AG04450 (cell line): ENCODE measurements at regions of chr1 and their contacts with region 1.

Region 1: GRCh38 chr1:160193091-160193819 is 2.9 kb downstream of the CASQ1 start:
- DNase-seq: peak; percentile 78
- H3K4me3 ChIP-seq: no peak overlapping the region
- H3K27ac ChIP-seq: no peak overlapping the region
- H3K27me3 ChIP-seq: peaks cover 8% of the 10 kb centered on the region
- CTCF ChIP-seq: peak; percentile 99

Region 2: GRCh38 chr1:160098852-160099561 is 94.2 kb before region 1 on chr1:
- CTCF ChIA-PET with region 1: interaction called, 67 read pairs
- POLR2A ChIA-PET with region 1: no interaction called
- DNase-seq: peak; percentile 79
- H3K4me3 ChIP-seq: peak overlapping the region; percentile 78
- H3K27ac ChIP-seq: peak overlapping the region; percentile 47
- H3K27me3 ChIP-seq: no peaks in the 10 kb centered on the region
- CTCF ChIP-seq: no peak

Region 3: DNA sequence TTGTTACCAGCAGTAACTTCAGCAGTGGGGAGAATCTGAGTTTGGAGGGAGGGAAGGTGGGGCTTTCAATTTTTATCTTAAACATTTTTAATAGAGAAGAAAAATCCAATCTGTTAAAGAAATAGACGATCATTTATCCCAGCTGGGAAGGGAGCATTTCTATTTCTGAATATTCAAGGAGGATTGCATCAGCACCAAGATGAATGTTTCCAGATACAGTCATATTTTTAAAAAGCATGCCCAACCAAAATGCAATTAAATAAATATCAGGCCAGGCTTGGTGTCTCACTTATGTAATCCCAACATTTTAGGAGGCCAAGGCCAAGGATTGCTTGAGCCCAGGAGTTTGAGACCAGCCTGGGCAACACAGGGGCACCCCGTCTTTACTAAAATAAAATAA is 43.5 kb before region 1 on chr1:
- CTCF ChIA-PET with region 1: interaction called, 21 read pairs
- POLR2A ChIA-PET with region 1: interaction called, 3 read pairs
- DNase-seq: no peak
- H3K4me3 ChIP-seq: no peak overlapping the region
- H3K27ac ChIP-seq: no peak overlapping the region
- H3K27me3 ChIP-seq: no peaks in the 10 kb centered on the region
- CTCF ChIP-seq: no peak

Region 4: GRCh38 chr1:160219062-160219929 is 26.0 kb after region 1 on chr1:
- CTCF ChIA-PET with region 1: interaction called, 258 read pairs
- POLR2A ChIA-PET with region 1: interaction called, 9 read pairs
- DNase-seq: peak; percentile 55
- H3K4me3 ChIP-seq: no peak overlapping the region
- H3K27ac ChIP-seq: peak overlapping the region; percentile 71
- H3K27me3 ChIP-seq: no peaks in the 10 kb centered on the region
- CTCF ChIP-seq: peak; percentile 84

Region 5: DNA sequence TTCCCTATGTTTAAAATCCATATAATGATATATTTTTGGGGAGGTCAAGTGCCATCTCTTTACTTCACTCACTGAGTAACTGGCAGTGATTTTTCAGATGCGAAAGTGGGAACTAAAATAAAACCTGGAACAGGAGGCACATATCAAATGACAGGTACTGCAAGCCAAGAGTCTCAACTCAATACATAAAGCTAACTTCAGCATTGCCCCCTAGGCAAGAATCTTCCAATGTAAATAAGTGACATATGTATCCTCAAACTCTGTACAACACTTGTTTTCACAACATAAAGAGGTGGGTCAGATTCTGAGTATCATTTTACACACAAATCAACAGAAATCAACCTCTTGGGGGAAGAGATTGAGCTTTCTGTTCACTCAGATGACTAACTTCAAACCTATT is 51.0 kb after region 1 on chr1:
- CTCF ChIA-PET with region 1: interaction called, 147 read pairs
- POLR2A ChIA-PET with region 1: no interaction called
- DNase-seq: no peak
- H3K4me3 ChIP-seq: no peak overlapping the region
- H3K27ac ChIP-seq: no peak overlapping the region
- H3K27me3 ChIP-seq: no peaks in the 10 kb centered on the region
- CTCF ChIP-seq: no peak

Region 6: GRCh38 chr1:160284782-160285344 is 91.6 kb after region 1 on chr1 and contains the start of gene PEX19:
- CTCF ChIA-PET with region 1: interaction called, 175 read pairs
- POLR2A ChIA-PET with region 1: interaction called, 3 read pairs
- DNase-seq: peak; percentile 89
- H3K4me3 ChIP-seq: peak within 1 kb of the TSS; percentile 93
- H3K27ac ChIP-seq: peak within 1 kb of the TSS; percentile 85
- H3K27me3 ChIP-seq: no peaks in the 10 kb centered on the region
- CTCF ChIP-seq: no peak
- polyA plus RNA-seq, gene PEX19: 77.2 and 87.5 TPM in 2 replicates